ENCODE measurements at regions of chr10 and their contacts with region 1.

Region 1: GRCh38 chr10:15122477-15123030 is 25.4 kb downstream of the RPP38 start:
- DNase-seq: no peak
- H3K4me3 Mint-ChIP-seq: peak overlapping the region; percentile 52
- H3K27ac Mint-ChIP-seq: peak overlapping the region; percentile 93
- H3K4me1 Mint-ChIP-seq: peaks cover 40% of the 10 kb centered on the region
- H3K27me3 Mint-ChIP-seq: no peaks in the 10 kb centered on the region

Region 2: GRCh38 chr10:15141136-15142054 is 18.8 kb after region 1 on chr10:
- intact Hi-C with region 1: loop called (anchors 1 kb)
- DNase-seq: peak; percentile 36
- H3K4me3 Mint-ChIP-seq: peak overlapping the region; percentile 63
- H3K27ac Mint-ChIP-seq: peak overlapping the region; percentile 90
- H3K4me1 Mint-ChIP-seq: peaks cover 45% of the 10 kb centered on the region
- H3K27me3 Mint-ChIP-seq: no peaks in the 10 kb centered on the region

Region 3: DNA sequence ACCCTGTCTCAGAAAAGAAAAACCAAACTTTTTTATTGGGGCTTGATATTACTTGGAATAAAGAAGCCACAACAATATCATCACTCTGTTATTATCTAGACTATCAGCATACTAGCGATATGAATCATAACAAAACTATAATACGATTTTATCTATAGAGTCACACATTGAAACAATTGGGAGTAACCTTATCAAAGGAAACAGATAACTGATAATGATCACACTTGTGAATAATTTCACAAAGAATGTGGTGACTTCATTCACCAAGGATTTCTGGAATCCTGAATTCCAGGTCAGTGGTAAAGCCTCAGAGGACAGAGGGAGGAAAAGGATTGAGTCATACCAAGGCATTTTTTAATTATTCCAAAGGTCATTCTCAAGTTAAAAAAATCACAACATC is 78.1 kb after region 1 on chr10:
- intact Hi-C with region 1: loop called (anchors 2 kb)
- DNase-seq: no peak
- H3K4me3 Mint-ChIP-seq: no peak overlapping the region
- H3K27ac Mint-ChIP-seq: no peak overlapping the region
- H3K4me1 Mint-ChIP-seq: peaks cover 47% of the 10 kb centered on the region
- H3K27me3 Mint-ChIP-seq: peaks cover 3% of the 10 kb centered on the region

Region 4: DNA sequence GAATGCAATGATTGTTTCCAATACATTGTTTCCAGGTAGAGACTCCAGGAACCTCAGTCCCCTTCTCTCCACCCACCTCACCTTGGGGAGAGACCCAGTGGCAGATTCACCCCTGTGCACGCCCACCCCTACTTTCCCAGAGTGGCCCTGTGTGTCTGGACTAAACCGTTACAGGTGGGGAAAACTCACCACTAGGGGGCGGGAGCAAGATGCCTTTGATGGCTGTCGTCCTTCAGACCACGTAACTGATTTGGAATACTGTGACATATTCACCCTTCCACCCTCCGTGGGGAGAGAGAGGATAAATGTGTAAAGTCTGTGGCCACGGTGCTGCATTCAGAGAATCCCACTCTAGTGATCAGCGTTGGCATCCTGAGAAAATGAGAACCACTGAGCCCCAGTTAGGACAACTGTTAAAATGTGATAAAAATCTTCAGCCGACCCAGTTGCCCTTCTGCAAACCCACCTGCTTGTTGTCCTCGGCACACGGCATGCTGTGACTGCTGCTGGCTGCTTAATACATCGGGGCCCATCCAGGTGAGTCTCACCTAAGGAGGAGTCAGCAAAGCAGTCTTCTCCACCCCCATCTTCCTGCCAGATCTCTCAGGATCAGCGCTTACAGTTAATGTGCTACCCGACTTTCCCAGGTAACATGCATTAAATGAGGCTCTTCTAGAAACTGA is 87.4 kb after region 1 on chr10:
- intact Hi-C with region 1: loop called (anchors 1 kb)
- DNase-seq: peak; percentile 66
- H3K4me3 Mint-ChIP-seq: no peak overlapping the region
- H3K27ac Mint-ChIP-seq: no peak overlapping the region
- H3K4me1 Mint-ChIP-seq: peaks cover 42% of the 10 kb centered on the region
- H3K27me3 Mint-ChIP-seq: no peaks in the 10 kb centered on the region

Region 5: DNA sequence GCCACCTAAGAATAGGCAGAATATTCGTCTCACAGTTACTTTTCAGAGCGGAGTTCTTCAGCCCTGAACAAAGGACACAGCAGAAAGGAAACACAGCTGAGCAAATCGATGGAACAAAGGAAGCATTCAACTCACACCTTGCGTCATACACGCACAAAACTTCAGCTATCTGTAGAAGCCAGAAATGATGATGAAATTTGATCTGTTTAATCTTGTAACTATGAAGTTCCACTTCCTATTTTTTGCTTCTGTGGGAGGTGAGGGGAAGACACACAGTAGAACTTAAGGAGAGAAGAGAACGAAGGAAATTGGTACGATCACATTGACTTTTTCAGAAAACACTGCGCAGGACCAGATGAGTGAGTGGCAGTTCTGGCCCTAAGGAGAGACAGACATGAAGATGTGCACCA is 222.3 kb after region 1 on chr10:
- intact Hi-C with region 1: no loop called
- DNase-seq: no peak
- H3K4me3 Mint-ChIP-seq: no peak overlapping the region
- H3K27ac Mint-ChIP-seq: no peak overlapping the region
- H3K4me1 Mint-ChIP-seq: no peaks in the 10 kb centered on the region
- H3K27me3 Mint-ChIP-seq: peaks cover 21% of the 10 kb centered on the region